ENCODE measurements at regions of chr5 and their contacts with region 1.

Region 1: GRCh38 chr5:109788596-109788995 is 98.9 kb downstream of the MAN2A1 start:
- DNase-seq: no peak
- H3K4me3 ChIP-seq: no peak overlapping the region
- H3K4me3 Mint-ChIP-seq: peak overlapping the region in 3 of 8 donors; percentile 25 to 59 (median 55)
- H3K27ac ChIP-seq: no peak overlapping the region
- H3K27ac Mint-ChIP-seq: peak overlapping the region in 3 of 7 donors; percentile 6 to 35 (median 22)
- H3K4me1 ChIP-seq: peaks cover 12% of the 10 kb centered on the region
- H3K4me1 Mint-ChIP-seq: peaks cover 14 to 28% (median 22%) of the 10 kb centered on the region in 4 donors
- H3K27me3 ChIP-seq: no peaks in the 10 kb centered on the region
- H3K27me3 Mint-ChIP-seq: no peaks in the 10 kb centered on the region

Region 2: DNA sequence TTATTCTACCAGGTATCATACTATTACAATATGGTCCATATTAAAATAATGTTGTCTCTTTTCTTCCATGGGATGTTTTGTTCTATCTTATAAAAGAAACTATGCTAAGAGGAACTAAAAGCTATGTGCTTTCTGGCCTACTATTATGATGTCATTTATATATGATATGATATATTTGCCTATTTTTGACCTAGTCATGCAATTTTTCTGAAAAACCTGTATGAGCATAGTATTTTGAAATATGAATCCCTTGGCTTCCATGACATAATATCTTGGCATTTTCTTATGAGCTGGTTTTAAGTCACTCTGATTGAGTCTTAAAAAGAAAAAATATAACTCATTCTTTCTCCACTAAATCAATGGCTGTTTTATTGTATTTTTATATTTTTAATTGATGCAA is 38.1 kb before region 1 on chr5:
- CTCF ChIA-PET with region 1: no interaction called
- POLR2A ChIA-PET with region 1: interaction called, 4 read pairs
- intact Hi-C with region 1: loop called (anchors 5 kb)
- DNase-seq: no peak
- H3K4me3 ChIP-seq: no peak overlapping the region
- H3K4me3 Mint-ChIP-seq: no peak overlapping the region
- H3K27ac ChIP-seq: no peak overlapping the region
- H3K27ac Mint-ChIP-seq: peak overlapping the region in 2 of 7 donors; percentile 8 to 26
- H3K4me1 ChIP-seq: peaks cover 25% of the 10 kb centered on the region
- H3K4me1 Mint-ChIP-seq: peaks cover 44 to 65% (median 44%) of the 10 kb centered on the region in 4 donors
- H3K27me3 ChIP-seq: no peaks in the 10 kb centered on the region
- H3K27me3 Mint-ChIP-seq: no peaks in the 10 kb centered on the region